Sigmoid colon (tissue), 7 donors: ENCODE measurements at regions of chr3 and their contacts with region 1.

Region 1: GRCh38 chr3:197959898-197960693 is at the start of gene LMLN:
- DNase-seq: peak; percentile 98
- H3K4me3 ChIP-seq: peak within 1 kb of the TSS; percentile 75 to 85 (median 78)
- H3K27ac ChIP-seq: peak within 1 kb of the TSS; percentile 84 to 87 (median 86)
- H3K4me1 ChIP-seq: peaks cover 0 to 28% (median 23%) of the 10 kb centered on the region in 4 donors
- H3K27me3 ChIP-seq: no peaks in the 10 kb centered on the region
- CTCF ChIP-seq: no peak
- EP300 ChIP-seq: peak in 1 of 4 donors; percentile 40
- POLR2A ChIP-seq: peak; percentile 53 to 67
- total RNA-seq, gene LMLN: 3.3 to 7.5 (median 6.9) TPM

Region 2: GRCh38 chr3:197835509-197835908 is 124.6 kb before region 1 on chr3:
- intact Hi-C with region 1: no loop called
- DNase-seq: no peak
- H3K4me3 ChIP-seq: no peak overlapping the region
- H3K27ac ChIP-seq: no peak overlapping the region
- H3K4me1 ChIP-seq: no peaks in the 10 kb centered on the region
- H3K27me3 ChIP-seq: no peaks in the 10 kb centered on the region
- CTCF ChIP-seq: no peak
- EP300 ChIP-seq: no peak
- POLR2A ChIP-seq: no peak

Region 3: GRCh38 chr3:197949754-197950660 is 10.1 kb before region 1 on chr3 and contains the start of gene RPL35A:
- intact Hi-C with region 1: loop called (anchors 1 kb)
- DNase-seq: peak; percentile 92
- H3K4me3 ChIP-seq: peak within 1 kb of the TSS; percentile 52 to 73 (median 58)
- H3K27ac ChIP-seq: peak within 1 kb of the TSS; percentile 79 to 92 (median 90)
- H3K4me1 ChIP-seq: peaks cover 0 to 42% (median 37%) of the 10 kb centered on the region in 4 donors
- H3K27me3 ChIP-seq: no peaks in the 10 kb centered on the region
- CTCF ChIP-seq: no peak
- EP300 ChIP-seq: no peak
- POLR2A ChIP-seq: peak; percentile 85 to 87
- total RNA-seq, gene RPL35A: 603 to 1,719 (median 870) TPM

Region 4: GRCh38 chr3:197983076-197983475 is 23.0 kb after region 1 on chr3:
- intact Hi-C with region 1: no loop called
- DNase-seq: no peak
- H3K4me3 ChIP-seq: no peak overlapping the region
- H3K27ac ChIP-seq: no peak overlapping the region
- H3K4me1 ChIP-seq: no peaks in the 10 kb centered on the region
- H3K27me3 ChIP-seq: no peaks in the 10 kb centered on the region
- CTCF ChIP-seq: no peak
- EP300 ChIP-seq: no peak
- POLR2A ChIP-seq: no peak

Region 5: GRCh38 chr3:198080521-198081280 is 120.6 kb after region 1 on chr3:
- intact Hi-C with region 1: loop called (anchors 10 kb)
- DNase-seq: peak; percentile 78
- H3K4me3 ChIP-seq: peak overlapping the region; percentile 36 to 49 (median 42)
- H3K27ac ChIP-seq: peak overlapping the region in 1 of 4 donors; percentile 33
- H3K4me1 ChIP-seq: peaks cover 0 to 21% (median 20%) of the 10 kb centered on the region in 4 donors
- H3K27me3 ChIP-seq: peaks cover 19 to 93% (median 38%) of the 10 kb centered on the region in 3 donors
- CTCF ChIP-seq: peak in 1 of 4 experiments; percentile 80
- EP300 ChIP-seq: no peak
- POLR2A ChIP-seq: no peak